ENCODE measurements at regions of chr2 and their contacts with region 1.

Region 1: DNA sequence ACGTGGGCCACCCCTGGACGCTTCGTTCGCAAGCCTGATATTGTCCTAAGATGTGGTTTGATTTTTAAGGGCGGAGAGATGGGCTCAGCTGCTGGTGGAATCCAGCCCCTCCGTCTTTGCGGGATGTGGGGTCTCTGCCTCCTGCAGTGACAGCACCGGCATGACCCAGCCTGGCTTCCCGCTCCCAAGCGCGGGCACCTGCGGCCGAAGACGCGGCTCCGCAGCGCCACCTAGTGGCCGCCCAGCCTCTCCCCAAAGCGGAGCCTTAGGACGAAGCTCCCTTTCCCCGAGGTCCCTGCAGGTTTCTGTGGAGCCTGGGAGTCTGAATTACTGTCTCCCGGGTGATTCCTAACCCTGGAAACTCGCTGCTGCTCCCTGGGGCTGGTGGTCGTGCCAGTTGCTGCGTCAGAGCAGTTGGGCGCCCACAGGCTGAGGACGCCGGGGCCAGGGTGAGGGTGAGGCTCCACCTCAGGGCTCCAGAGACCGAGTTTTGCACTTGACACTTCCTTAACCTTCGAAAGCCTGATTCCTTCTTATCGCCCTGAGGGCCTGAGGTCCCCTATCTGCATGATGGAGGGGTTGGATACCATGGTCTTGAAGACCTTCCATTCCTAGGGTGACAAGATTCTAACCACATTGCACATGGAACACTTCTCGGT is 137.5 kb downstream of the TPO start:
- DNase-seq: peak; percentile 52

Region 2: GRCh38 chr2:1246239-1246638 is 304.5 kb before region 1 on chr2:
- in situ Hi-C with region 1: no loop called
- DNase-seq: no peak

Region 3: GRCh38 chr2:1742681-1743395 is 192.1 kb after region 1 on chr2:
- in situ Hi-C with region 1: loop called (anchors 5 kb)
- DNase-seq: peak; percentile 88

Measured in Caki2 (cell line).